ENCODE measurements at regions of chr11 and their contacts with region 1.

Region 1: DNA sequence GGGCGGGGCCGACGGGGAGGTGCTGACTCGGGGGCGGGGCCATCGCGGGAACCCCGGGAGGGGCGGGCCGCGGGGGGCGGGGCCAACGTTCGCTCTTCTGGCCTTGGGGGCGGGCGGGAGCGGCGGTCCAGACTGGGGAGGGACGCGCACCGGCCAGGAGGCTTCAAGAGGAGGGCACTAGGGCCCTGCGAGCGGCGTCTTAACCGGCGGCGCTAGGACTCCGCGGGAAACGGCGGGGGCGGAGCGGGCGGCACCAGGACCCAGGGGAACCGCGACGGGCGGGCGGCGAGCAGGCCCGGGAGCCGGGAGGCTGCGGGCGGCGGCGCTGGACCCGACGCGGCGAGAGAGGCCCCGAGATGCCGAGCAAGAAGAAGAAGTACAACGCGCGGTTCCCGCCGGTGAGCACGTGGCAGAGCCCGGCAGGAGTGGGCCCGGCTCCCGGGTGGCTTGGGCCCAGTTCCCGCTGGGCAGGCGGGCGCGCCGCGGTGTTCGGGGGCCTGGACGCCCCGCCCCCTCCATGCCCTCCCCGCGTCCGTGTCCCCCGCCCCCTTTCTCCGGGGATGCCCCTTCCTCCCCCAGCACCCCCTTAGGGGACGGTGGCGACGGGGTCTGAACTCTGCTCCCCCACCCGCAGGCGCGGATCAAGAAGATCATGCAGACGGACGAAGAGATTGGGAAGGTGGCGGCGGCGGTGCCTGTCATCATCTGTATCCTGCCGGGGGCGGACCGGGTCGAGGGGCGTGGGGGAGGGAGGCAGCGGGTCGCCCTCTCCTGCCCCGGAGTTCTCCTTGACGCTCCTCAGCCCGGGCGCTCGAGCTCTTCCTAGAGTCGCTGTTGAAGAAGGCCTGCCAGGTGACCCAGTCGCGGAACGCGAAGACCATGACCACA is at the start of gene DRAP1:
- DNase-seq: peak; percentile 99
- H3K4me3 ChIP-seq: peak within 1 kb of the TSS; percentile 90 to 99 (median 97)
- H3K27ac ChIP-seq: peak within 1 kb of the TSS; percentile 95 to 99 (median 98)
- H3K4me1 ChIP-seq: peaks cover 0 to 55% (median 53%) of the 10 kb centered on the region in 4 donors
- H3K27me3 ChIP-seq: no peaks in the 10 kb centered on the region
- CTCF ChIP-seq: no peak
- EP300 ChIP-seq: no peak
- POLR2A ChIP-seq: peak; percentile 14 to 32
- total RNA-seq, gene DRAP1: 58.9 to 115 (median 79.2) TPM

Region 2: GRCh38 chr11:65859200-65859811 is 60.1 kb before region 1 on chr11:
- intact Hi-C with region 1: loop called (anchors 5 kb)
- DNase-seq: peak; percentile 100
- H3K4me3 ChIP-seq: peak overlapping the region; percentile 79 to 98 (median 90)
- H3K27ac ChIP-seq: peak overlapping the region; percentile 89 to 99 (median 95)
- H3K4me1 ChIP-seq: peaks cover 0 to 61% (median 50%) of the 10 kb centered on the region in 4 donors
- H3K27me3 ChIP-seq: no peaks in the 10 kb centered on the region
- CTCF ChIP-seq: no peak
- EP300 ChIP-seq: peak in 1 of 4 donors; percentile 28
- POLR2A ChIP-seq: peak; percentile 98 to 99

Region 3: GRCh38 chr11:65900125-65900898 is 19.1 kb before region 1 on chr11 and contains the start of gene FOSL1:
- intact Hi-C with region 1: loop called (anchors 2 kb)
- DNase-seq: peak; percentile 93
- H3K4me3 ChIP-seq: peak within 1 kb of the TSS; percentile 15 to 70 (median 57)
- H3K27ac ChIP-seq: peak within 1 kb of the TSS; percentile 53 to 79 (median 74)
- H3K4me1 ChIP-seq: peaks cover 0 to 21% (median 16%) of the 10 kb centered on the region in 4 donors
- H3K27me3 ChIP-seq: peaks cover 0 to 15% (median 8%) of the 10 kb centered on the region in 3 donors
- CTCF ChIP-seq: no peak
- EP300 ChIP-seq: no peak
- POLR2A ChIP-seq: no peak
- total RNA-seq, gene FOSL1: 0.36 to 12.4 (median 2.8) TPM in 3 of 4 donors, not detected in the other

Region 4: DNA sequence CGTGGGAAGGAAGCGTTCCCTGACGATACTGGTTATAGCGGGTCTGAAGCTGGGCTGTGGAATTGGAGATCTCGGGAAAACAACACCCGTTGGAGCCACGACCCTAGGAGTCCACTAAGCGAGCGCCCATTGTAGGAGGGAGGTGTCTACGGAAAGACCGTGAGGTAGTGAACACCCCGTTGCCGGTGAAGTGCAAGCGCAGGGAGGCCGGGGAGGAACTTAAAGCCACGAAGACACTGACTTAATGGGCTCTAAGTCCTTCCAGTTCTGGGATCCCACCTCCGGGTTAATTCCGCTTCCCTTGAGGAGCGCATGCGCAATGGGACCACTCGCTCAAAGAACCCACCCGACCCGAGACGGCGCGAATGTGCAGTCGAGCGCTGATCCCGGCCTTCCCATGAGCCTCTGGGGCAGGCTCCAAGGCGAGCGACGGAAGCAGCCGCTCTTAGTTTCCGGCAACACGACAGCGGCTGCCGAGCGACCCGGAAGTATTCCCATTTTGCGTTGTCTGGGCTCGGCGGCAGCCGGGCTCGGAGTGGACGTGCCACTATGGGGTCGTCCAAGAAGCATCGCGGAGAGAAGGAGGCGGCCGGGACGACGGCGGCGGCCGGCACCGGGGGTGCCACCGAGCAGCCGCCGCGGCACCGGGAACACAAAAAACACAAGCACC is 42.0 kb after region 1 on chr11 and contains the start of gene SART1:
- intact Hi-C with region 1: loop called (anchors 2 kb)
- DNase-seq: peak; percentile 99
- H3K4me3 ChIP-seq: peak within 1 kb of the TSS; percentile 92 to 99 (median 96)
- H3K27ac ChIP-seq: peak within 1 kb of the TSS; percentile 90 to 94 (median 92)
- H3K4me1 ChIP-seq: peaks cover 0 to 31% (median 30%) of the 10 kb centered on the region in 4 donors
- H3K27me3 ChIP-seq: no peaks in the 10 kb centered on the region
- CTCF ChIP-seq: no peak
- EP300 ChIP-seq: peak in 1 of 4 donors; percentile 49
- POLR2A ChIP-seq: peak in 1 of 2 donors; percentile 58
- total RNA-seq, gene SART1: 33.8 to 38.8 (median 37.0) TPM

Region 5: GRCh38 chr11:66011239-66011784 is 91.9 kb after region 1 on chr11:
- intact Hi-C with region 1: no loop called
- DNase-seq: no peak
- H3K4me3 ChIP-seq: peak overlapping the region in 1 of 4 donors; percentile 37
- H3K27ac ChIP-seq: no peak overlapping the region
- H3K4me1 ChIP-seq: peaks cover 0 to 11% (median 8%) of the 10 kb centered on the region in 4 donors
- H3K27me3 ChIP-seq: peaks cover 15 to 29% (median 27%) of the 10 kb centered on the region in 3 donors
- CTCF ChIP-seq: no peak
- EP300 ChIP-seq: no peak
- POLR2A ChIP-seq: no peak

Region 6: DNA sequence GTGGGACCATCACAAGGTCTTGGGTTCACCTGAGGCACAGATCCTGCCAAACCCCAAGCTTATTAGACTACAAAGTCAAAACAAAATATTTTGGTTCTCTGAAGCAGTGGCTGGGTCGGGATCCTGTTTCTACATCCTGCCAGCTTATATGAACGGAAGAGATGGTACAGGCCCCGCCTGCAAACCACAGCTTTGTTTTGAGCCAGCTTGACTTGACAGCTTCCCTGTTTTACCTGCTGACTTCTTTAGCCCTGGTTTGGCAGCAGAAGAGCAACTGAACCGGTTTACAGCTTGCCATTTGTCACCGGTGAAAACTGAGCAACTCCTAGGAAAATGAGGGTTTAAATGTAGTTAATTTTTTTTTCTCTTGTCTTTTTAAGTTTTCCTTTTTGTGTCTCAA is 162.1 kb after region 1 on chr11:
- intact Hi-C with region 1: no loop called
- DNase-seq: peak; percentile 73
- H3K4me3 ChIP-seq: no peak overlapping the region
- H3K27ac ChIP-seq: peak overlapping the region; percentile 17 to 75 (median 50)
- H3K4me1 ChIP-seq: peaks cover 0 to 59% (median 46%) of the 10 kb centered on the region in 4 donors
- H3K27me3 ChIP-seq: no peaks in the 10 kb centered on the region
- CTCF ChIP-seq: no peak
- EP300 ChIP-seq: no peak
- POLR2A ChIP-seq: no peak

Region 7: GRCh38 chr11:66268283-66268951 is 349.0 kb after region 1 on chr11 and contains the start of gene RAB1B:
- intact Hi-C with region 1: no loop called
- DNase-seq: peak; percentile 100
- H3K4me3 ChIP-seq: peak within 1 kb of the TSS; percentile 73 to 94 (median 84)
- H3K27ac ChIP-seq: peak within 1 kb of the TSS; percentile 96 to 99 (median 97)
- H3K4me1 ChIP-seq: peaks cover 0 to 35% (median 30%) of the 10 kb centered on the region in 4 donors
- H3K27me3 ChIP-seq: no peaks in the 10 kb centered on the region
- CTCF ChIP-seq: no peak
- EP300 ChIP-seq: no peak
- POLR2A ChIP-seq: peak; percentile 59 to 81
- total RNA-seq, gene RAB1B: 65.4 to 93.7 (median 77.3) TPM